Posterior vena cava (tissue), 2 donors: ENCODE measurements at regions of chr11 and their contacts with region 1.

Region 1: GRCh38 chr11:19742588-19743292 is 30.1 kb downstream of the NAV2 start:
- DNase-seq: peak; percentile 87

Region 2: DNA sequence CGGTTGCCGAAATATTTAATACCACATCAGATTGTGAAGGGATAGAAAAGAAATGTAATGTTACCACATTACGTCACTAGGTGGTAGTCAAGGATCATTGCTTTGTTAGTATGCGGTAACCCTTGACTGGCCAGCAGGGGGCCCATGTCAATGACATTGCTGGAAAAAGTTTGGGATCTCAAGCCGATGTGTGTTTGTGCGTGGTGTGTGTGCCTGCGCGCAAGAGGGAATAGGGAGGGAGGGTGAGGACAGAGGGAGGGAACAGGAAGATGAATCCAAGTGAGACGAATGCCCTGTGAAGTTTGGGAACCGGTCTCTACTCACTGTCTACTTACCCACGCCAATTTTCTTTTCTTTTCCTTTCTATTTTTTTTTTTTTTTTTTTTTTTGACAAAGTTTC is 671.5 kb before region 1 on chr11:
- intact Hi-C with region 1: loop called in 1 of 2 experiments (anchors 10 kb)
- DNase-seq: peak; percentile 86

Region 3: DNA sequence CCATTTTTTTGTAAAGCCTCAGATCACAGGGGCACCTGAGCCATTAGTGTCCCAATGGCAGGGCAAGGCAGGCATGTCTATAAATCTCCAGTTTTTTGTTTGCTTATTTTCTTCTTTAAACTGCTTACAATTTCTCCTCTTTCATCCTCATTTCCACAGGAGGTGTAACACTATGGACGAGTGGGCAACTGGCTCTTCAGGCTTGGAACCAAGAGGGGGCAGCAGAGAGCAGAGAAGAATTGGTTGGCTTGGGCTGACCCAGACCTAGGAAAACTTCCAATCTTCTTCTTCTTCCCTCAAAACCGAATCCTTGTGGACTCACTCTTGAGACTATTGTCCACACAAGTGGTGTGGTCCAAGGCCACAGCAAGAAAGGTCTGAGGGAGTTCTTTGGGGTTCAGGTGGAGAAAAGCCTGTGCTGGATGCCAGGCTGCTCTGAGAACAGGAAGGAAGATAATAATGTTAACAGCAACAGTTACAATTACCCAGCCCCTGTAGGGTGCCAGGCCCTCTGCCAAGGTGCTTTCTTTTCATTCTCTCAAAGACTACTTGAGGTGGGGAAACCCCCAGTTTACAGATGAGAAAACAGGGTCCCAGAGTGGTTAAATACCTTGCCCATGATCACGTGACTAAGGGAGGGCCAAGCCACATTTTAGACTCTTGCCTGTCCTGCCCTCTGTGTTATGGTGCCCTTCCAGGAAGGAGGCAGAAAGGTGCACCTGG is 431.3 kb before region 1 on chr11:
- intact Hi-C with region 1: loop called in 1 of 2 experiments (anchors 10 kb)
- DNase-seq: peak; percentile 88

Region 4: DNA sequence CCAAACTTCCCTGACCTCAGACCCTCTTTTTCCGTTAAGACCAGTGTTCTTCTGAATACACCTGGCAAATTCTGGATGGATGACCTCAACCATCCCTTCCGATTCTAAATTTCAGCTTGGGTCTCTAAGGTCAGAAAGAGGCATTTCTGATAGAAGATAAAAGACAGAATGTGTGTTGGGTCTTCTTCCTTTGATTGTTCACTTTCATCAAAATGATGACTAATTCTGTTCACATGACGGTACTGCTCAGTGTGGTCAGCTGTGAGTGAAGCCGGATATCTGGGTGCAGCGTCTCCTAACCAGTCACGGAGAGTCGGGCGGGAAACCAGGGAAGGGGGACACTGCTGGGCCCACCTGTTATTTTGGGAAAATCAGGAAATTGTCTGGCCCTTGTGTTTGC is 181.7 kb before region 1 on chr11:
- intact Hi-C with region 1: loop called (anchors 2 to 5 kb)
- DNase-seq: no peak

Region 5: DNA sequence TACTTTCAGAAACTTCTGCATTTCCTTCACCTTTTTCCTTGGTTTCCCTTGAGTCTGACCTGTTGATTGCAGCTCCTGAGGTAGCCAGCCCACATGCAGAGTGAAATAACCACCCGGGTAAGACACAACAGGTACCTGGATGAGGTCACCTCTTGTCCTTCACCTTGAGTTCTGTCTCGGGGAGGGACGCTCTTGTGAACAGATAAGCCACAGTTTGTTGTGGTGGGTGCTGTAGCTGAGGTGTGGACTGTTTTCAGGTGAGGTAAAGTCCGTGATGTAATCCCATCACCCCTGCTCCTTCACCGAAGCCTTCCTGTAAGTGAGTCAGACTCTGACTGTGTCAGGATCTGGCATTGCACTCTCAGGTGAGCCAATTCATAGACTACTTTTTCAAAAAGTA is 153.0 kb after region 1 on chr11:
- intact Hi-C with region 1: loop called in 1 of 2 experiments (anchors 5 kb)
- DNase-seq: no peak